A673 (cell line): ENCODE measurements at regions of chr10 and their contacts with region 1.

Region 1: GRCh38 chr10:61140765-61141392 is 196.9 kb upstream of the RHOBTB1 start:
- DNase-seq: peak; percentile 85
- H3K4me3 ChIP-seq: no peak overlapping the region
- H3K27ac ChIP-seq: no peak overlapping the region
- H3K4me1 ChIP-seq: peaks cover 22% of the 10 kb centered on the region
- H3K27me3 ChIP-seq: no peaks in the 10 kb centered on the region
- CTCF ChIP-seq: peak; percentile 80

Region 2: DNA sequence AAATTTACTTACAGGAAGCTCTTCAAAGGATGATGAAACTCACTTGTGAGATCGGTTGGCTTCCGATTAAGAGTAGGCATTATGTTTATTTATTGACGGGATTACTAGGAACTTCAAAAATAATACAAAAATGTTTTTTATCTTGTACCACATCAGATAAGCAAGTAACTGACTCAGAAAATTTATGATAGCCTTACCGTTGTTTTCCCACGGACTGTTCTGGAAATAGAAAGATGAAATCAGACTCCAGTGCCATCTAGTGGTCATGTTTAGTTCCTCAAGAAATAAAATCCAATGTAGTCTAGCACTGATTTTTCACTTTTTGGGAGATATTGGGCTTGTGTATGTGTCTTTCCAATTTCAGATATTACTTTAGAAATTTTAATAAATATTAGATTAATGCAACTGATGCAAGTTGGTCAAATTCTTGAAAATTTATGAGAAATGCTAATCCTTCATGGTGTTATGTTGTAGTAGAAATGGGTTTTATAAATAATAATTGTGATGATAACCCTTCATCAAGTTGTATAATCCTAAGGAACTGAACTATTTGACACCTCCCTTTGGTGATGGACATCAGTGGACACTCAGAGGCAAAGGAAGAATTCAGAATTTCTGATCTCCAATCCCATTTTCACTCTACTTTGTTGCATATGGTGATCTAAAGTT is 143.5 kb after region 1 on chr10:
- CTCF ChIA-PET with region 1: no interaction called
- POLR2A ChIA-PET with region 1: no interaction called
- intact Hi-C with region 1: loop called (anchors 5 kb)
- DNase-seq: peak; percentile 81
- H3K4me3 ChIP-seq: no peak overlapping the region
- H3K27ac ChIP-seq: no peak overlapping the region
- H3K4me1 ChIP-seq: no peaks in the 10 kb centered on the region
- H3K27me3 ChIP-seq: no peaks in the 10 kb centered on the region
- CTCF ChIP-seq: peak; percentile 79

Region 3: DNA sequence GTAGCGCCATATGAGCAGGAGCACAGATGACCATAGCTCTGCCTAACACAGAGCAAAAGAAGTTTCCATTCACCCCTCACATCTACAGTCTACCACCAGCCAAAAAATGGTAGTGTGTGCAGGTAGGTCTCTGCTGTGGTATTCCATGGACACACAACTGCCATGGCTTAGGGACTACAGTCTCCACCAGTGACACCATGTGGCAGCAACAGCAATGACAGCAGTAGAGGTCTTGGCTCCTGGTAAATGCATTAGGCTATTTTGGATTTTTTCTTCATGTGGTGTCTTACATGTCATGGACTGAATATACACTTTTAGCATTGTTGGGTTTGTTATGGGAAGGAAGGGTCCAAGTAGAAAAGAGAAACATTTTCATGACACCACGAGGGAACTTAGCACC is 451.7 kb after region 1 on chr10:
- CTCF ChIA-PET with region 1: no interaction called
- POLR2A ChIA-PET with region 1: no interaction called
- intact Hi-C with region 1: loop called (anchors 2 kb)
- DNase-seq: peak; percentile 62
- H3K4me3 ChIP-seq: no peak overlapping the region
- H3K27ac ChIP-seq: no peak overlapping the region
- H3K4me1 ChIP-seq: no peaks in the 10 kb centered on the region
- H3K27me3 ChIP-seq: no peaks in the 10 kb centered on the region
- CTCF ChIP-seq: peak; percentile 77

Region 4: GRCh38 chr10:61733358-61733940 is 592.6 kb after region 1 on chr10:
- CTCF ChIA-PET with region 1: no interaction called
- POLR2A ChIA-PET with region 1: no interaction called
- intact Hi-C with region 1: loop called (anchors 5 kb)
- DNase-seq: peak; percentile 76
- H3K4me3 ChIP-seq: no peak overlapping the region
- H3K27ac ChIP-seq: no peak overlapping the region
- H3K4me1 ChIP-seq: peaks cover 11% of the 10 kb centered on the region
- H3K27me3 ChIP-seq: no peaks in the 10 kb centered on the region
- CTCF ChIP-seq: peak; percentile 77

Region 5: DNA sequence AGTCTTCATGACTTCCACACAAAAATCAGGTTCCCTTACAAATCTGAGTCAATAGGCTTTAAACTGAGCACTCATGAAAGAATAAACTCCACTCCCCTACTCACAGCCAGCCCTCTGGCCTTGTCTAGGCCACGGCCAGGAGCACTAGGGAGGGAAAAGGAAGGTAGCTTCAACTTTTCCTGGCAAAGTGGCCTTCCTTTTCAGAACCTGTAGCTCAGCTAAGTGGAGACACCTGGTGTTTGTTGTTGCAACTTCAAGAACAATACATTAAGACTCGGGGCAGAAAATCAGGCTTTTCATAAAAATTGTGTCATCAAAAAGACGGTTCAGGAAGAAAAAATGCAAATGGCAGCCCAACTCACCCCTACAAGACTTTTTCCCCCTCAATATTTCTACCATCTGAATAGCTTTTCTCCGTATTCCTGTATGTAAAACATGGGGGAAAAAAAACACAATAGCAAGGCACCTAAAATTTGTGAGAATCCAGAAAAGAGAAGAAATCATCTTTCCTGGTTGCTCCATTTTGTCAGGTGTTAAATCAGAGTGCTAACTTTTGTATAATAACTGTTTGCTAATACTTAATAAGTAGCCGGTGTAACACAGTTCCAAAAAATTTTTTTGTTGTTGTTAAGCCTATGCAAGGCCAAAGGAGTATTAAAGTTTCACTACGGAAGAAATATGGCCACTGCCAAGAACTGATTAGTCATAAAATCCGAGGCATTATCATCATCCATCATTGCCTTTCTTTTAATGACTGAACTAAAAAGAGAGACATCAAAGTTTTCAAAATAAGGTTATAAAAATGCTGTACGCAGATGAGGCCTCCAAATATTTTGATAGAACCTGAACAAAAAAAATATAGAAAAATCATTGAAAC is 694.4 kb after region 1 on chr10:
- CTCF ChIA-PET with region 1: no interaction called
- POLR2A ChIA-PET with region 1: no interaction called
- intact Hi-C with region 1: loop called (anchors 10 kb)
- DNase-seq: peak; percentile 80
- H3K4me3 ChIP-seq: peak overlapping the region; percentile 0
- H3K27ac ChIP-seq: peak overlapping the region; percentile 77
- H3K4me1 ChIP-seq: peaks cover 39% of the 10 kb centered on the region
- H3K27me3 ChIP-seq: no peaks in the 10 kb centered on the region
- CTCF ChIP-seq: peak; percentile 57